Left lung (tissue), 14 donors: ENCODE measurements at regions of chr1 and their contacts with region 1.

Region 1: GRCh38 chr1:178749581-178750166 is 24.6 kb downstream of the RALGPS2 start:
- DNase-seq: no peak
- ATAC-seq: no peak
- H3K4me3 ChIP-seq: no peak overlapping the region
- H3K27ac ChIP-seq: no peak overlapping the region
- H3K4me1 ChIP-seq: peaks cover 0 to 6% of the 10 kb centered on the region in 2 donors
- H3K27me3 ChIP-seq: no peaks in the 10 kb centered on the region
- CTCF ChIP-seq: no peak

Region 2: DNA sequence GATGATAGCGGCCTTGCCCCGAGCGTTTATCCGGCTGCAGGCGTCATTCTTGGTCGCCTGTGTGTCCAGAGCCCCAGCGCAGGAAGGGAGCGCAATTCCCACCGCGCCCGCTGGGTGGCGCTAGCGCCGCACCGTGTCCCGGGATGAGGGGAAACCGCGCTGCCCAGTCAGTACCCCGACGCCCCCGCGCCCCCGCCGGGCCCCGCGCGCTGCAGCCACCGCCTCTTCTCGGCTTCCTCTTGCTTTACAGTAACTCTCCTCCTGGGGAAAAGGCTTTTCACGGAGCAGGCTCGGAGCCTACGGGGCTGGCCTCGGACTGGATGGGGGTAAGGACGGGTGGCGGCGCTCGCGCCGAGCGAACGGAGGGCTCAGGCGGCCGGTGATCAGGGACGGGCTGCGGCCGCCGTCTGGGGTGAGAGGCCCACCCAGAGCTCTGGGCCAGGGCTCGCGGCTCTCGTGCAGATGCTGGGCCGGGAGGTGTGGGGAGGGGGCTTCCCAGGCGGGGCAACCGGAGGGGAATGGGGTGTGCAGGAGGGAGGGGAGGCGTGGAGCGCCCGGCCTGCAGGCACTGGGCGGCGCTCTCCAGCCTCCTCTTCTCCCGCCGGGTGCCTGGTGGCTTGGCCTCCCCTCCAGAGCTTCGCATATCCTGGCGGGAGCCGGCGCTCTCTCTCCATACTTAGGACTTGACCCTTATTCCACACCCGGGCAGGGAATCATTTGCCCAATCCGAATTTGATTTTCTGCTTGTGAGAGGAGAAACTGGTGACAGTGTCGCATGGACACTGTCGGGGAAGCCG is 206.9 kb before region 1 on chr1:
- intact Hi-C with region 1: loop called in 1 of 2 experiments (anchors 5 kb)
- DNase-seq: peak; percentile 86 to 97 (median 92)
- ATAC-seq: peak; percentile 98
- H3K4me3 ChIP-seq: peak overlapping the region; percentile 75 to 76
- H3K27ac ChIP-seq: peak overlapping the region; percentile 62 to 78
- H3K4me1 ChIP-seq: peaks cover 3 to 14% of the 10 kb centered on the region in 2 donors
- H3K27me3 ChIP-seq: no peaks in the 10 kb centered on the region
- CTCF ChIP-seq: peak; percentile 99